HepG2 (cell line): ENCODE measurements at regions of chr13 and their contacts with region 1.

Region 1: GRCh38 chr13:112873851-112874750 is 94.9 kb upstream of the MCF2L start:
- DNase-seq: peak; percentile 67
- ATAC-seq: peak; percentile 93
- H3K4me3 ChIP-seq: no peak overlapping the region
- H3K27ac ChIP-seq: no peak overlapping the region
- H3K4me1 ChIP-seq: peaks cover 6% of the 10 kb centered on the region; the same call in 1 of the 2 replicates
- H3K27me3 ChIP-seq: no peaks in the 10 kb centered on the region
- CTCF ChIP-seq: peak; percentile 91
- EP300 ChIP-seq: no peak
- POLR2A ChIP-seq: no peak
- RAD21 ChIP-seq: peak; percentile 80

Region 2: GRCh38 chr13:112638157-112638750 is 235.8 kb before region 1 on chr13:
- CTCF ChIA-PET with region 1: interaction called, 7 read pairs
- POLR2A ChIA-PET with region 1: no interaction called
- in situ Hi-C with region 1: loop called (anchors 5 kb)
- intact Hi-C with region 1: loop called (anchors 1 kb)
- DNase-seq: no peak
- ATAC-seq: no peak
- H3K4me3 ChIP-seq: no peak overlapping the region
- H3K27ac ChIP-seq: no peak overlapping the region
- H3K4me1 ChIP-seq: peaks cover 11% of the 10 kb centered on the region
- H3K27me3 ChIP-seq: peaks cover 4 to 57% of the 10 kb centered on the region in 2 experiments
- CTCF ChIP-seq: no peak
- EP300 ChIP-seq: no peak
- POLR2A ChIP-seq: no peak
- RAD21 ChIP-seq: no peak